Natural killer cell (primary cell): ENCODE measurements at regions of chr2 and their contacts with region 1.

Region 1: GRCh38 chr2:180222644-180223043 is 215.5 kb upstream of the CWC22 start:
- DNase-seq: no peak
- ATAC-seq: no peak
- H3K4me3 ChIP-seq: no peak overlapping the region
- H3K4me3 Mint-ChIP-seq: no peak overlapping the region
- H3K27ac ChIP-seq: no peak overlapping the region
- H3K27ac Mint-ChIP-seq: no peak overlapping the region
- H3K4me1 ChIP-seq: no peaks in the 10 kb centered on the region
- H3K4me1 Mint-ChIP-seq: no peaks in the 10 kb centered on the region
- H3K27me3 ChIP-seq: no peaks in the 10 kb centered on the region
- H3K27me3 Mint-ChIP-seq: no peaks in the 10 kb centered on the region
- CTCF ChIP-seq: no peak

Region 2: DNA sequence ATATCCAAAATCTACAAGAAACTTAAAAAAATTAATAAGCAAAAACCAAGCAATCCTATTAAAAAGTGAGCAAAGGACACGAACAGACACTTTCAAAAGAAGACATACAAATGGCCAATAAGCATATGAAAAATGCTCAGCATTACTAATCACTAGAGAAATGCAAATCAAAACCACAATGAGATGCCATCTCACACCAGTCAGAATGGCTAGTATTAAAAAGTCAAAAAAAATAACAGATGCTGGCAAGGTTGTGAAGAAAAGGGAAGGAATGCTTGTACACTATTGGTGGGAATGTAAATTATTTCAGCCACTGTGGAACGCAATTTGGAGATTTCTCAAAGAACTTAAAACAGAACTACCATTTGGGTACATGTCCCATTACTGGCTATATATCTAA is 829.2 kb before region 1 on chr2:
- intact Hi-C with region 1: no loop called
- DNase-seq: no peak
- ATAC-seq: no peak
- H3K4me3 ChIP-seq: no peak overlapping the region
- H3K4me3 Mint-ChIP-seq: no peak overlapping the region
- H3K27ac ChIP-seq: no peak overlapping the region
- H3K27ac Mint-ChIP-seq: no peak overlapping the region
- H3K4me1 ChIP-seq: no peaks in the 10 kb centered on the region
- H3K4me1 Mint-ChIP-seq: no peaks in the 10 kb centered on the region
- H3K27me3 ChIP-seq: no peaks in the 10 kb centered on the region
- H3K27me3 Mint-ChIP-seq: no peaks in the 10 kb centered on the region
- CTCF ChIP-seq: no peak

Region 3: DNA sequence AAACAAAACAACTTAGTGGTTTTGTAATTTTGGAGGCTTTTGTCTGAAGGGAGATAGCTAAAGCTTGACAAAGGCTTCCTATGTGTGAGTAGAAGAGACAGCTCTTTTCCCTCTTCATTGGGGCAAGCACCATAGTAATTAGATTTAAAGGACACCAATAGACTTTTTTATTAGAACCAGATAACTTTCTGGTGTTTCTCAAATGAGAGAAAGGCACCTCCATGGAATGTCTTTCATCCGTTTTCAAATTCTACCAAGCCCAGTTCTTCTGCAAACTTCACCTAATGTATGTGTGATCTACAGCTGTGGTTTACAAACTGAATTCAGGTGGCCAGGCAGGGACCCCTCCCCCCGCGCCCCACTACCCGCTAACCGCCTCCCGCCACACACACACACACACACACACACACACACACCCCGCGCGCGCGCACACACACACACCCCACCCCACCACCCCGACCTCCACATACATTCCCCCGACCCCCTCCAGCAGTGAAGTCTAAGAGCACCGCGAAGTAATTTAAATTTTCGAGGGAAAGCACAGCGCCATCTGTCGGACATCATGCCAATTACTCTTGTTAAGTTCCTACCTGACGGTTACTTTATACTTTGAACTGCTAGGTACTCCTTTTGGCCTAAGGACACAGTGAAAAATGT is 1731.4 kb after region 1 on chr2:
- intact Hi-C with region 1: loop called (anchors 10 kb)
- DNase-seq: peak; percentile 53 to 81
- ATAC-seq: peak; percentile 73 to 89 (median 76)
- H3K4me3 ChIP-seq: no peak overlapping the region
- H3K4me3 Mint-ChIP-seq: peak overlapping the region; percentile 48
- H3K27ac ChIP-seq: no peak overlapping the region
- H3K27ac Mint-ChIP-seq: no peak overlapping the region
- H3K4me1 ChIP-seq: peaks cover 3% of the 10 kb centered on the region
- H3K4me1 Mint-ChIP-seq: peaks cover 9 to 15% of the 10 kb centered on the region in 2 donors
- H3K27me3 ChIP-seq: no peaks in the 10 kb centered on the region
- H3K27me3 Mint-ChIP-seq: peaks cover 2 to 17% of the 10 kb centered on the region in 2 donors
- CTCF ChIP-seq: peak; percentile 62